Uterus (tissue), 4 donors: ENCODE measurements at regions of chr16 and their contacts with region 1.

Region 1: GRCh38 chr16:60295451-60295850 is 1561.3 kb upstream of the GOT2 start:
- DNase-seq: no peak
- H3K4me3 ChIP-seq: no peak overlapping the region
- H3K27ac ChIP-seq: no peak overlapping the region
- H3K4me1 ChIP-seq: no peaks in the 10 kb centered on the region
- H3K27me3 ChIP-seq: no peaks in the 10 kb centered on the region
- CTCF ChIP-seq: no peak
- POLR2A ChIP-seq: no peak

Region 2: GRCh38 chr16:60151987-60152386 is 143.5 kb before region 1 on chr16:
- intact Hi-C with region 1: no loop called
- DNase-seq: no peak
- H3K4me3 ChIP-seq: no peak overlapping the region
- H3K27ac ChIP-seq: no peak overlapping the region
- H3K4me1 ChIP-seq: no peaks in the 10 kb centered on the region
- H3K27me3 ChIP-seq: no peaks in the 10 kb centered on the region
- CTCF ChIP-seq: no peak
- POLR2A ChIP-seq: no peak

Region 3: DNA sequence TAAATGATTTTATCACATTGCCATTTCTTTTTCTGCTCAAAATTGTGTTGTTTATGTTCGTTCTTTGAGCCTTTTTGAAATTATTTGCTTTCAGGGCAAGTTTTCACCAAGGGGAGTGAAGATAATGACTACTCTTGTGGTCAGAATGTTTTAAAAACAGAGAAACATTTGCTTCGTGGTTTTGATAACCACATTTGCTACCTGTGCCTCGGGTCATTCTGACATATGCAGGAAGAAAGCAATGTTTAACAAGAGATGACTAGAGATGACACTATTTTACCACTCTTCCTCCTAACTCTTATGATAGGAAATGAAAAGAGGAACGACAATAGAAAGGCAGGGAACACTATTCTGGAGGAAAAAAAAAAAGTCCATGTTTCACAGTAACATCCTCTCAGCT is 64.8 kb before region 1 on chr16:
- intact Hi-C with region 1: loop called (anchors 10 kb)
- DNase-seq: no peak
- H3K4me3 ChIP-seq: no peak overlapping the region
- H3K27ac ChIP-seq: no peak overlapping the region
- H3K4me1 ChIP-seq: no peaks in the 10 kb centered on the region
- H3K27me3 ChIP-seq: no peaks in the 10 kb centered on the region
- CTCF ChIP-seq: no peak
- POLR2A ChIP-seq: no peak